ENCODE measurements at regions of chr1 and their contacts with region 1.

Region 1: DNA sequence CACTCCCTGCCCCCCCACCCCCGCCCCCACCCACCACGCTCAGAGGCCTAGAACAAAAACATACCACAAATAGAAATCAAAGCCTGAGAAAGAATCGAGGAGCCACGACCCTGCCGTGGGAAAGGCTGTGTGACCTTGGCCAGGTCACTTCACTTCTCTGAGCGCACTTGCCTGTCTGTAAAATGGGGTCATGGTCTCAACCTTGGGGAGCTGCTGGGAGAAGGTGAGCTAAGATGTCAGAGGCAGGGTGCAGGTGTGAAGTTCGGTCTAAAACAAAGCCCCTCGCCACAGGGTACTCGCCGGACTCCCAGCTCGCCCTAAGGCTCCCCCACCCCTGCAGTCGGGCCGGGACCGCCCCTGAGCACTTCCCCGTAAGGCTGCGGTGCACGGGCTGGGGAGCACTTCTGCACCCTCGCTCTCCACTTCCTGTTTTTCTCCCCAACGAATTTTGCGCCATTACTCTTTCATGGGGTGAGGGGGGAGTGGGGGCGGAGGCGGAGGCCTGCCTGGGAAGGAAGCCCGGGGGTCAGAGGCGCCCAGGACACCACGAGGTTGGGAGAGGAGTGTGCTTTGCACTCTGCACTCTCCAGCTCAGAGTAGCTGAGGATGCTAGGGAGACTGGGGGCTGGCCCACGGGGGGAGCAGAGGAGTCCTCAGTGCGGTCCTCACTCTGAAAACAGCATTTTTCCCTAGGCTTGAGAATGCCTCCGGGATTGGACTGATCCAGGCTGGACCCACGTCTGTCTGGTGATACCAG is 21.9 kb upstream of the PIK3CD start:
- DNase-seq: peak; percentile 73 to 82 (median 78)
- H3K4me3 ChIP-seq: peak overlapping the region; percentile 95
- H3K4me3 Mint-ChIP-seq: peak overlapping the region; percentile 87 to 96 (median 92)
- H3K27ac ChIP-seq: peak overlapping the region; percentile 75
- H3K27ac Mint-ChIP-seq: peak overlapping the region; percentile 81 to 98 (median 88)
- H3K4me1 ChIP-seq: peaks cover 78% of the 10 kb centered on the region
- H3K4me1 Mint-ChIP-seq: peaks cover 29 to 85% (median 52%) of the 10 kb centered on the region in 4 donors
- H3K27me3 ChIP-seq: no peaks in the 10 kb centered on the region
- H3K27me3 Mint-ChIP-seq: no peaks in the 10 kb centered on the region

Region 2: DNA sequence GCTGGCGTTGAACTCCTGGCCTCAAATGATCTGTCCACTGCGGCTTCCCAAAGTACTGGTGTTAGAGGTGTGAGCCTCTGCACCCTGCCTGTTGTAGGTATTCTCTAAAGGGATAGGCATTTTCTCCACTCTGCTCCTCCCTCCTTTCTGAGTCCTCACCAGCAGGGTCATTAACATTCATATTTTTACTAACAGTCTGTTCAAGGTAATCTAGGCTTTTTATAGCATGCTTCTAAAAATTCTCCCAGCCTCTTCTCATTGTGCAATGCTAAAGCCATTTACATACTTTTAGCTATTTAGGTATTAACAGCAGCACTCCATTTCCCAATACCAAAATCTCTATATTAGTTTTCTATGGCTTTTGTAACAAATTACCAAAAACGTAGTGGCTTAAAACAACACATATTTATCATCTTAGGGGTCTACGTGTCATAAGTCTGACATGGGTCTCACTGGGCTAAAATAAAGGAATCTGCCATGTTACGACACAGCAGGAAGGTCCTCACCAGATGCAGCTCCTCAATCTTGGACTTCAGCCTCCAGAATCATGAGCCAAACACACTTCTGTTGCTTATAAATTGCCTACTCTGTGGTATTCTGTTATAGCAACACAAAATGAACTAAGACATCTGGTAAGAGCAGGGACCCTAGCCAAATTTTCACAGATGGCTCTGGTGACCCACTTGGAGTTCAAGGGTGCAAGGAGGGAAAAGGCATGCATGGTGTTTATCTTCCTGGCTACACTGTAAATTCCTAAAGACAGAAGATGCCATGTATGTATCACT is 600.5 kb before region 1 on chr1:
- CTCF ChIA-PET with region 1: no interaction called
- POLR2A ChIA-PET with region 1: no interaction called
- intact Hi-C with region 1: no loop called
- DNase-seq: no peak
- H3K4me3 ChIP-seq: no peak overlapping the region
- H3K4me3 Mint-ChIP-seq: no peak overlapping the region
- H3K27ac ChIP-seq: no peak overlapping the region
- H3K27ac Mint-ChIP-seq: no peak overlapping the region
- H3K4me1 ChIP-seq: no peaks in the 10 kb centered on the region
- H3K4me1 Mint-ChIP-seq: no peaks in the 10 kb centered on the region
- H3K27me3 ChIP-seq: no peaks in the 10 kb centered on the region
- H3K27me3 Mint-ChIP-seq: peaks cover 9 to 12% of the 10 kb centered on the region in 2 donors

Region 3: GRCh38 chr1:9315411-9316079 is 314.1 kb before region 1 on chr1:
- CTCF ChIA-PET with region 1: no interaction called
- POLR2A ChIA-PET with region 1: no interaction called
- intact Hi-C with region 1: no loop called
- DNase-seq: peak in 1 of 5 donors; percentile 5
- H3K4me3 ChIP-seq: no peak overlapping the region
- H3K4me3 Mint-ChIP-seq: peak overlapping the region in 7 of 8 donors; percentile 13 to 65 (median 49)
- H3K27ac ChIP-seq: no peak overlapping the region
- H3K27ac Mint-ChIP-seq: peak overlapping the region in 5 of 7 donors; percentile 7 to 74 (median 51)
- H3K4me1 ChIP-seq: peaks cover 11% of the 10 kb centered on the region
- H3K4me1 Mint-ChIP-seq: peaks cover 15 to 28% (median 17%) of the 10 kb centered on the region in 4 donors
- H3K27me3 ChIP-seq: no peaks in the 10 kb centered on the region
- H3K27me3 Mint-ChIP-seq: no peaks in the 10 kb centered on the region

Region 4: GRCh38 chr1:9326596-9326995 is 303.0 kb before region 1 on chr1:
- CTCF ChIA-PET with region 1: no interaction called
- POLR2A ChIA-PET with region 1: no interaction called
- intact Hi-C with region 1: no loop called
- DNase-seq: no peak
- H3K4me3 ChIP-seq: no peak overlapping the region
- H3K4me3 Mint-ChIP-seq: no peak overlapping the region
- H3K27ac ChIP-seq: no peak overlapping the region
- H3K27ac Mint-ChIP-seq: no peak overlapping the region
- H3K4me1 ChIP-seq: no peaks in the 10 kb centered on the region
- H3K4me1 Mint-ChIP-seq: peaks cover 0 to 8% (median 4%) of the 10 kb centered on the region in 4 donors
- H3K27me3 ChIP-seq: no peaks in the 10 kb centered on the region
- H3K27me3 Mint-ChIP-seq: no peaks in the 10 kb centered on the region

Region 5: GRCh38 chr1:9651565-9652378 is 22.1 kb after region 1 on chr1 and contains the start of gene PIK3CD:
- CTCF ChIA-PET with region 1: interaction called, 142 read pairs
- POLR2A ChIA-PET with region 1: interaction called, 658 read pairs
- intact Hi-C with region 1: loop called (anchors 1 kb)
- DNase-seq: peak in 3 of 5 donors; percentile 34 to 59 (median 36)
- H3K4me3 ChIP-seq: peak within 1 kb of the TSS; percentile 84 to 96
- H3K4me3 Mint-ChIP-seq: peak within 1 kb of the TSS; percentile 100
- H3K27ac ChIP-seq: peak within 1 kb of the TSS; percentile 71
- H3K27ac Mint-ChIP-seq: peak within 1 kb of the TSS; percentile 97 to 100 (median 98)
- H3K4me1 ChIP-seq: peaks cover 46% of the 10 kb centered on the region
- H3K4me1 Mint-ChIP-seq: peaks cover 23 to 65% (median 45%) of the 10 kb centered on the region in 4 donors
- H3K27me3 ChIP-seq: no peaks in the 10 kb centered on the region
- H3K27me3 Mint-ChIP-seq: no peaks in the 10 kb centered on the region
- total RNA-seq, gene PIK3CD: 220 to 236 TPM

Region 6: GRCh38 chr1:9689011-9689706 is 59.5 kb after region 1 on chr1:
- CTCF ChIA-PET with region 1: interaction called, 21 read pairs
- POLR2A ChIA-PET with region 1: interaction called, 76 read pairs
- intact Hi-C with region 1: loop called (anchors 1 kb)
- DNase-seq: peak; percentile 75 to 80 (median 78)
- H3K4me3 ChIP-seq: peak overlapping the region; percentile 57 to 63
- H3K4me3 Mint-ChIP-seq: peak overlapping the region; percentile 61 to 89 (median 78)
- H3K27ac ChIP-seq: peak overlapping the region; percentile 37
- H3K27ac Mint-ChIP-seq: peak overlapping the region in 4 of 7 donors; percentile 46 to 85 (median 52)
- H3K4me1 ChIP-seq: peaks cover 77% of the 10 kb centered on the region
- H3K4me1 Mint-ChIP-seq: peaks cover 38 to 80% (median 60%) of the 10 kb centered on the region in 4 donors
- H3K27me3 ChIP-seq: no peaks in the 10 kb centered on the region
- H3K27me3 Mint-ChIP-seq: no peaks in the 10 kb centered on the region

Region 7: GRCh38 chr1:9717193-9718005 is 87.8 kb after region 1 on chr1:
- CTCF ChIA-PET with region 1: interaction called, 219 read pairs
- POLR2A ChIA-PET with region 1: interaction called, 403 read pairs
- intact Hi-C with region 1: loop called (anchors 1 kb)
- DNase-seq: peak; percentile 90 to 95 (median 91)
- H3K4me3 ChIP-seq: peak overlapping the region; percentile 66 to 82
- H3K4me3 Mint-ChIP-seq: peak overlapping the region; percentile 91 to 96 (median 94)
- H3K27ac ChIP-seq: peak overlapping the region; percentile 58
- H3K27ac Mint-ChIP-seq: peak overlapping the region; percentile 92 to 97 (median 93)
- H3K4me1 ChIP-seq: peaks cover 96% of the 10 kb centered on the region
- H3K4me1 Mint-ChIP-seq: peaks cover 18 to 84% (median 56%) of the 10 kb centered on the region in 4 donors
- H3K27me3 ChIP-seq: no peaks in the 10 kb centered on the region
- H3K27me3 Mint-ChIP-seq: no peaks in the 10 kb centered on the region

Region 8: GRCh38 chr1:9774712-9775607 is 145.3 kb after region 1 on chr1:
- CTCF ChIA-PET with region 1: no interaction called
- POLR2A ChIA-PET with region 1: no interaction called
- intact Hi-C with region 1: no loop called
- DNase-seq: no peak
- H3K4me3 ChIP-seq: no peak overlapping the region
- H3K4me3 Mint-ChIP-seq: no peak overlapping the region
- H3K27ac ChIP-seq: no peak overlapping the region
- H3K27ac Mint-ChIP-seq: peak overlapping the region in 3 of 7 donors; percentile 22 to 46 (median 36)
- H3K4me1 ChIP-seq: no peaks in the 10 kb centered on the region
- H3K4me1 Mint-ChIP-seq: peaks cover 11 to 40% (median 17%) of the 10 kb centered on the region in 4 donors
- H3K27me3 ChIP-seq: no peaks in the 10 kb centered on the region
- H3K27me3 Mint-ChIP-seq: no peaks in the 10 kb centered on the region

Region 9: DNA sequence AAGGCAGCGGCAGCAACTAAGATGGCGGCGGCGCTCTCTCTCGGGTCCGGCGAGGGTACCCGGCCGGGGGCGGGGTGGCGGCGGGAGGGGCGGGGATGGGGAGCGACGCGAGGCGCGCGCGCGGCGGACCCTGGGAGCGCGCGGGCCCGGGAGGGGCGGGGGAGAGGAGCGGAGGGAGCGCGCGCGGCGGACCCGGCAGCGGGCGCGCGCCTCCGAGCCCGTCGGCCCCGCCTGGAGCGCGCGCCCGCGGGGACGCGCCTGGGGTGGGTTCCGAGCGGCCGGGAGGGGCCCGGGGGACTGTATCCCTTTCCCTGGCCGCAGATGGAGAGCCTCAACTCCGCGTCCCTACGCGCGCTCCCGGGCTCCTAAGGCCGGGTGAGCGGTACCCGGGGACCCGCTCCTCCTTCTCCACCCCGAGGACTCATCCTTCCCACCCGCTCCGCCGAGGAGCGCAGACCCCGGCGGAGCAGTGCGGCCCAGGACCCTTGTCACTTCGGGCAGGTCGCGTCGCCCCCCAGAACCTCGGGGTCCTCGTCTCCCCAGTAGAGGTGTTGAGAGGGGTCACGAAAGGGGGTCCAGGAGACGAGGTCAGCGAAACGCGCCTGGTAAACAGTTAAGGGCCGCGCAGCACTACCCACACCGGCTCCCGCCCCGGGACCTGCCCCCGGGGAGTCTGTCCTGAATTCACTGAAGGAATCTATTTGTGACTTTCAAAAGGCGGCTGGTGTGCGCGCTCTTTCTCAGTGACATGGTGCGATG is 194.5 kb after region 1 on chr1 and contains the start of gene CLSTN1:
- CTCF ChIA-PET with region 1: no interaction called
- POLR2A ChIA-PET with region 1: interaction called, 8 read pairs
- intact Hi-C with region 1: loop called (anchors 1 kb)
- DNase-seq: peak; percentile 85 to 92 (median 86)
- H3K4me3 ChIP-seq: peak within 1 kb of the TSS; percentile 73 to 76
- H3K4me3 Mint-ChIP-seq: peak within 1 kb of the TSS; percentile 94 to 99 (median 97)
- H3K27ac ChIP-seq: peak within 1 kb of the TSS; percentile 55
- H3K27ac Mint-ChIP-seq: peak within 1 kb of the TSS; percentile 90 to 97 (median 96)
- H3K4me1 ChIP-seq: peaks cover 55% of the 10 kb centered on the region
- H3K4me1 Mint-ChIP-seq: peaks cover 25 to 68% (median 41%) of the 10 kb centered on the region in 4 donors
- H3K27me3 ChIP-seq: no peaks in the 10 kb centered on the region
- H3K27me3 Mint-ChIP-seq: no peaks in the 10 kb centered on the region
- total RNA-seq, gene CLSTN1: 107 to 109 TPM

Region 10: DNA sequence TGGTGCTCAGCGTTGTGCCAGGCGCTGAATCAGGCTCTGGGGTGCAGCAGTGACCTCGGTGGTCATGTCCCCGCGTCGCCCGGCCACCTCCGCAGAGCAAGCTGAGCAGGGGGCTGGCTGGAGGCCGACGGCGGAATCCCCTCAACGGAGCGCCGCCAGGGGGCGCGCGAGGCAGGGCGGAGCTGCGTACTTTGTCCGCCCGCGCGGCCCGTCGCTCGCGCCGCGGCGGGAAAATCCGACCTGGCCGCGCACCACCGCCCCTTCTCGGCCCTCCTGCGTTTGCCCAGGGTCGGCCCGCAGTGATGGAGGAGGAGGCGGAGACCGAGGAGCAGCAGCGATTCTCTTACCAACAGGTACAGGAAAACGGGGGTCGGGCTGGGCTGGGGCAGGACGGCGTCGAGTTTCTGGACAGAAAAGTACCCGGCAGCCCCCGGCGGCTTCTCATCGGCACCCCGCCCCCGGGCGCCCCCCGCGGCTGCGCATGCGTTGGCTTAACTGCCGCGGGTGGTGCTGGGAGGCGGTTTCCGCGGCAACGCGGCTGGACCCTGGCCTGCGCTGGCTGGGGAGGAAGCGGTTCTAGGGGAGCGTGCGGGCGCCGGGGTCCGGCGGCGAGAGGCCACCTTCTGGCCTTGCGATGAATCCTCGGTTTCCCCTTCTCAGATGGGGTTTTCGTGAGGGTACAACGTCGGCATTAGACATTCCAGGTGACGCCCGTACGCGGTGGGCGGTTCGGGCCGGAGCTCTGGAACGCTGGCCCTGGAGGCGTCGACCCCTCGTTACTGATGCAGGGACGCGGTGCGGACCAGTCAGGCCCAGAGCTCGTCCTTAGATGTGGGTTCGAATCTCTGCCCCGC is 800.8 kb after region 1 on chr1 and contains the start of gene CENPS:
- CTCF ChIA-PET with region 1: no interaction called
- POLR2A ChIA-PET with region 1: no interaction called
- intact Hi-C with region 1: loop called (anchors 2 kb)
- DNase-seq: peak; percentile 77 to 92 (median 87)
- H3K4me3 ChIP-seq: peak within 1 kb of the TSS; percentile 63 to 96
- H3K4me3 Mint-ChIP-seq: peak within 1 kb of the TSS; percentile 83 to 92 (median 91)
- H3K27ac ChIP-seq: peak within 1 kb of the TSS; percentile 83
- H3K27ac Mint-ChIP-seq: peak within 1 kb of the TSS; percentile 93 to 98 (median 95)
- H3K4me1 ChIP-seq: peaks cover 30% of the 10 kb centered on the region
- H3K4me1 Mint-ChIP-seq: peaks cover 13 to 37% (median 18%) of the 10 kb centered on the region in 4 donors
- H3K27me3 ChIP-seq: no peaks in the 10 kb centered on the region
- H3K27me3 Mint-ChIP-seq: no peaks in the 10 kb centered on the region
- total RNA-seq, gene CENPS: 7.2 to 7.9 TPM